Activated T-helper 2 cell treated with anti-CD3 and anti-CD28 coated beads, Interferon-gamma antibody, Interleukin-2, Interleukin-4, amounts not matched to agents 10 μg/mL and 5 μg/mL and 100 μg/mL, durations not matched to agents 14 hours and 24 hours and 36 hours (primary cell): ENCODE measurements at regions of chr17 and their contacts with region 1.

Region 1: DNA sequence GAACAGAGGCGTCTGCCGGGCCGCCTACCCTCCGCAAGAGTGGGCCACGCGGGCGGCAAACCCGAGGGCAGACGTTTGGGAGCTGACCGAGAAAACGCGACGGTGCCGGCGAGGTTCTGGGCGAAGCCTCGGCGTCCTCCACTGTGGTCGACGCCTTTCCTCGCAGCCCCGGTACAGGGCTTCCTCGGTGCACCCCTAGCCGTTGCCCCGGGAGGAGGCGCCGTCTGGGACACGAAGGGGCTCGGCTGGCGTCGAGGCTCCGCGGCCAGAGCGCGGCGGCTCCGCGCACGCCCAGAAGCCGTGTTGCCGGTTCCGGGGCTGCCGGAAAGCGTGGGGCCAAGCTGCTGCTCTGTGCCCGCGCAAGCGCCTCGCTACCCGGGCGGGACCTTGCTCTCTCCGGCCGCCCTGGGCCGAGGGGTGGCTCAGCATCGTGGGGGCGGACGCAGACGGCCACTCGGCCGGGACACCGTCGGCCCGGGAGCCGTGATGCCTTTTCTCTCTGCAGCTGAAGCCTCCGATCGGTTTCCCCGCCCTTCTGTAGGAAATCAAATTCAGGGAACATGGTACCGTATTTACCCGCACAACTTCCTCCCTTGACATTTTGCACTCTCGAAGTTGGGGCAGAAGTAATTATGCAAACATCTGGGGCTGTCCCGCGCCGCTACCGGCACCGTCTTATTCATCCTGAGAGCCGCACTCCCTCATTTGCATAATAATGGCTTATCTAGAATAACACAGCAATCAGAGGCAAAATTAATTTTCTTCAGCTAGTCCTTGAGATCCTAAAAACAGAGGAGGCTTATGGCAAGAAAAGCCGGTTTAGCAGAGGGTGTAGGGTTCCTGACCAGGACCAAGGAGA is 7.3 kb upstream of the CBX8 start:
- DNase-seq: peak; percentile 55
- H3K4me3 Mint-ChIP-seq: peak overlapping the region; percentile 59
- H3K27ac Mint-ChIP-seq: peak overlapping the region; percentile 76
- H3K4me1 Mint-ChIP-seq: peaks cover 36% of the 10 kb centered on the region
- H3K27me3 Mint-ChIP-seq: peaks cover 76% of the 10 kb centered on the region

Region 2: GRCh38 chr17:79749156-79749815 is 54.9 kb before region 1 on chr17:
- intact Hi-C with region 1: loop called (anchors 5 kb)
- DNase-seq: no peak
- H3K4me3 Mint-ChIP-seq: no peak overlapping the region
- H3K27ac Mint-ChIP-seq: no peak overlapping the region
- H3K4me1 Mint-ChIP-seq: peaks cover 16% of the 10 kb centered on the region
- H3K27me3 Mint-ChIP-seq: peaks cover 38% of the 10 kb centered on the region

Region 3: GRCh38 chr17:81394921-81395599 is 1590.8 kb after region 1 on chr17 and contains the start of gene BAHCC1:
- intact Hi-C with region 1: loop called (anchors 5 kb)
- DNase-seq: peak; percentile 73
- H3K4me3 Mint-ChIP-seq: peak within 1 kb of the TSS; percentile 38
- H3K27ac Mint-ChIP-seq: peak within 1 kb of the TSS; percentile 33
- H3K4me1 Mint-ChIP-seq: peaks cover 11% of the 10 kb centered on the region
- H3K27me3 Mint-ChIP-seq: peaks cover 46% of the 10 kb centered on the region
- total RNA-seq, gene BAHCC1: 0.90 and 0.91 TPM in 2 replicates